Vagina (tissue), 2 donors: ENCODE measurements at regions of chr1 and their contacts with region 1.

Region 1: GRCh38 chr1:95233737-95234500 is at the start of gene RWDD3:
- DNase-seq: peak in 1 of 2 donors; percentile 92
- H3K4me3 ChIP-seq: peak within 1 kb of the TSS; percentile 64 to 69
- H3K27ac ChIP-seq: peak within 1 kb of the TSS; percentile 83
- H3K4me1 ChIP-seq: peaks cover 53% of the 10 kb centered on the region
- H3K27me3 ChIP-seq: no peaks in the 10 kb centered on the region
- CTCF ChIP-seq: peak; percentile 74 to 90 (median 79)
- POLR2A ChIP-seq: peak in 1 of 2 donors; percentile 40
- total RNA-seq, gene RWDD3: 17.9 TPM

Region 2: GRCh38 chr1:95072532-95073419 is 161.1 kb before region 1 on chr1 and contains the start of gene ALG14:
- intact Hi-C with region 1: loop called (anchors 5 kb)
- DNase-seq: peak in 1 of 2 donors; percentile 95
- H3K4me3 ChIP-seq: peak within 1 kb of the TSS; percentile 46 to 75
- H3K27ac ChIP-seq: peak within 1 kb of the TSS; percentile 89
- H3K4me1 ChIP-seq: peaks cover 11% of the 10 kb centered on the region
- H3K27me3 ChIP-seq: no peaks in the 10 kb centered on the region
- CTCF ChIP-seq: no peak
- POLR2A ChIP-seq: peak in 1 of 2 donors; percentile 73
- total RNA-seq, gene ALG14: 0.74 TPM

Region 3: DNA sequence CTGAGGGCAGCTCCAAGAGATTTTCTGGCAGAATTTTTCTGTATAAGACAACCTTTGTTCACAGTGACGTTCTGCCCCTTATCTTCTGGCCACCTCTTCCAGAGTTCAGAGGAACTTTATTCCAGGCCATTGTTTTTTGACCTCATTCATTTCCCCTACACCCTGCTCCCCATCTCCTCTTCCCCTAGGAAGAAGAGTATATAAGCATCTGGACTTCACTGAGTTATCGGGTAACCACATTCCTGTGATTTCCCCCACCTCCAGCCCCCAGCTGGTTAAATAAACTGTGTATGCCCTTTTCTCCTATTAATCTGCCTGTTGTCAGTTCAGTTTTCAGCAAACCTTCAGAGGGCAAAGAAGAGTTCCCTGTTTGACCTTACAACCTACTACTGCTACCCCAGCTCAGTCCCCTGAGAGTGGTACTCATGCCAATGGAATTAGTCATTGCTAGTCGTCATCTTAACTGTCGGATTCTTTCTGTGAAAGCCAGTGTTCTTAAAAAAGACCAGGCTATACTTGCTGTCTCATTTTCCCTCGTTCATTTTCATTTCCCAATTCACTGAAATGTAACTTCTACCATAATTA is 146.9 kb before region 1 on chr1:
- intact Hi-C with region 1: loop called (anchors 2 kb)
- DNase-seq: no peak
- H3K4me3 ChIP-seq: no peak overlapping the region
- H3K27ac ChIP-seq: no peak overlapping the region
- H3K4me1 ChIP-seq: no peaks in the 10 kb centered on the region
- H3K27me3 ChIP-seq: no peaks in the 10 kb centered on the region
- CTCF ChIP-seq: no peak
- POLR2A ChIP-seq: no peak

Region 4: GRCh38 chr1:95752515-95753381 is 518.8 kb after region 1 on chr1:
- intact Hi-C with region 1: no loop called
- DNase-seq: no peak
- H3K4me3 ChIP-seq: no peak overlapping the region
- H3K27ac ChIP-seq: no peak overlapping the region
- H3K4me1 ChIP-seq: no peaks in the 10 kb centered on the region
- H3K27me3 ChIP-seq: no peaks in the 10 kb centered on the region
- CTCF ChIP-seq: no peak
- POLR2A ChIP-seq: no peak